ENCODE measurements at regions of chr4 and their contacts with region 1.

Region 1: GRCh38 chr4:184538023-184538599 is 63.8 kb upstream of the IRF2 start:
- DNase-seq: peak; percentile 89 to 90
- H3K4me3 ChIP-seq: peak overlapping the region; percentile 16 to 39 (median 32)
- H3K27ac ChIP-seq: peak overlapping the region; percentile 92 to 95 (median 93)
- H3K4me1 ChIP-seq: peaks cover 0 to 19% of the 10 kb centered on the region in 2 donors
- H3K27me3 ChIP-seq: no peaks in the 10 kb centered on the region
- CTCF ChIP-seq: peak; percentile 29 to 90 (median 78)
- POLR2A ChIP-seq: no peak

Region 2: GRCh38 chr4:184263910-184264732 is 274.0 kb before region 1 on chr4:
- intact Hi-C with region 1: loop called (anchors 5 kb)
- DNase-seq: peak; percentile 94 to 98
- H3K4me3 ChIP-seq: no peak overlapping the region
- H3K27ac ChIP-seq: no peak overlapping the region
- H3K4me1 ChIP-seq: no peaks in the 10 kb centered on the region
- H3K27me3 ChIP-seq: no peaks in the 10 kb centered on the region
- CTCF ChIP-seq: peak; percentile 77 to 93 (median 84)
- POLR2A ChIP-seq: no peak

Region 3: GRCh38 chr4:184474263-184475095 is 63.6 kb before region 1 on chr4 and contains the start of gene IRF2:
- intact Hi-C with region 1: loop called (anchors 5 kb)
- DNase-seq: peak; percentile 98
- H3K4me3 ChIP-seq: peak within 1 kb of the TSS; percentile 69 to 88 (median 76)
- H3K27ac ChIP-seq: peak within 1 kb of the TSS; percentile 94 to 98 (median 98)
- H3K4me1 ChIP-seq: peaks cover 9 to 27% of the 10 kb centered on the region in 2 donors
- H3K27me3 ChIP-seq: no peaks in the 10 kb centered on the region
- CTCF ChIP-seq: peak in 1 of 6 experiments; percentile 11
- POLR2A ChIP-seq: peak in 1 of 2 donors; percentile 87
- total RNA-seq, gene IRF2: 24.7 to 39.8 (median 34.5) TPM

Region 4: GRCh38 chr4:184563621-184564020 is 25.5 kb after region 1 on chr4:
- intact Hi-C with region 1: no loop called
- DNase-seq: no peak
- H3K4me3 ChIP-seq: no peak overlapping the region
- H3K27ac ChIP-seq: no peak overlapping the region
- H3K4me1 ChIP-seq: no peaks in the 10 kb centered on the region
- H3K27me3 ChIP-seq: no peaks in the 10 kb centered on the region
- CTCF ChIP-seq: no peak
- POLR2A ChIP-seq: no peak

Region 5: GRCh38 chr4:184627765-184628480 is 89.8 kb after region 1 on chr4:
- intact Hi-C with region 1: no loop called
- DNase-seq: no peak
- H3K4me3 ChIP-seq: no peak overlapping the region
- H3K27ac ChIP-seq: no peak overlapping the region
- H3K4me1 ChIP-seq: no peaks in the 10 kb centered on the region
- H3K27me3 ChIP-seq: no peaks in the 10 kb centered on the region
- CTCF ChIP-seq: no peak
- POLR2A ChIP-seq: no peak